ENCODE measurements at regions of chr11 and their contacts with region 1.

Region 1: DNA sequence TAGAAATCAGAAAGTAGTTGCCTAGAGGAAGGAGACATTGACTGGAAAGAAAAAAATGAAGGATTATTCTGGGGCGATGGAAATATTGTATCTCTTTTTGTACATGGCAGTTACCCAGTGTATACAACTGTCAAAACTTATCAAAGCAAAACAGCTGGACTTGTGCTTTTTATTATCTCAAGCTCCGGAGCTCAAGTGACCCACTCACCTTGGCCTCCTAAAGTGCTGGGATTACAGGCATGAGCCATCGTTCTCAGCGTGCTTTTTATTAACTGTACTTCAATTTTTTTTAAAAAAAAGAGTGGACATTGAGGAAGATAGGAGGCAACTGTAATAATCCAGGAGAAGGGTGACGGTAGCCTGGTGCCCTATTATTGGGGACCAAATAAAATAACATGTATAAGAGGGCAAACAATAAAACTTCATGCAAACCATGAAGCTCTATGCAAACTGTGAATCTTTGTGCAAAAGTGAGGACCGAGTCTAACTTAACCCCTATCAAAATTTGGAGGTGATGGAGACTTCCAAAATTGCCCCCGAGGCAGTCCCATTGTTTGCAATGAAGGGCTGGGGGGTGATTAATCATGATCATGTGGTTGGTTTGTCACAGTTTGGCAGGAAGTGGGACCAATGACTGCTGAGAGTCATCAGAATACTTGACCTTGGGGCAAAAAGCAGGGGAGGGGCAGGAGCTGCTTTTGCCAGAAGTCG is 23.5 kb downstream of the FZD4 start:
- DNase-seq: no peak
- H3K4me3 ChIP-seq: no peak overlapping the region
- H3K27ac ChIP-seq: peak overlapping the region; percentile 35 to 76 (median 57)
- H3K4me1 ChIP-seq: peaks cover 3 to 28% (median 19%) of the 10 kb centered on the region in 6 donors
- H3K27me3 ChIP-seq: no peaks in the 10 kb centered on the region
- CTCF ChIP-seq: no peak
- POLR2A ChIP-seq: no peak

Region 2: DNA sequence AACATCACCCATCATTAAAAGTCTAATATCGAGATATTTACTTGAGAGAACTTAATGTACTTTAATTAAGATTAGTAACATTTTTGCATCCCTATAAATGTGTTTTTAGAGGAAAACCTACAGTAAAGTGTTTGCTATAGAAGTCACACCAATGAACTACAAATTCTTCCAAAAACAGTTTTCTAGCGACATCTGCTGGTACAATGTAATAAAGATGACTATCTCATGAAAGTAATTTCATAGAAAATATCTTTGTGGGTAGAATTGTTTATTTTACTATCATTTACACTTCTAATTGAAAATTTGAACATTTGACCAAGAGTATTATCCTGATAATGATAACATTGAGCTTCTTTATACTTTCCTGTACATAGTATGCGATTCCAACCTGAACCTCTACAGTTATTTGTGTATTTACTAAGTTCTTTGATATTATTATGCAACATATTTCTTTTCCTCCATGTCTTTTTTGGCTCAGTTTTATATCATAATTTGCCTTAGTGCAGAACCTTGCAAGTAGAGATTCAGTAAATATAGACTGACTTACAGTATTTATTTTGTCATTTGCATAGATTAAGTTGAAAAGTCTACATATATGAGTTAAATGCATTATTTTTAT is 358.7 kb after region 1 on chr11:
- intact Hi-C with region 1: loop called (anchors 5 kb)
- DNase-seq: no peak
- H3K4me3 ChIP-seq: no peak overlapping the region
- H3K27ac ChIP-seq: no peak overlapping the region
- H3K4me1 ChIP-seq: no peaks in the 10 kb centered on the region
- H3K27me3 ChIP-seq: no peaks in the 10 kb centered on the region
- CTCF ChIP-seq: peak; percentile 9 to 70 (median 59)
- POLR2A ChIP-seq: no peak

Measured in spleen (tissue), 13 donors.